Mammary epithelial cell (primary cell): ENCODE measurements at regions of chr10 and their contacts with region 1.

Region 1: GRCh38 chr10:43026011-43026973 is 50.6 kb upstream of the RET start:
- DNase-seq: peak; percentile 98
- H3K4me3 ChIP-seq: peak overlapping the region in 1 of 3 experiments; percentile 26
- H3K27ac ChIP-seq: peak overlapping the region; percentile 40
- H3K4me1 ChIP-seq: peaks cover 19% of the 10 kb centered on the region
- H3K27me3 ChIP-seq: no peaks in the 10 kb centered on the region
- CTCF ChIP-seq: no peak

Region 2: DNA sequence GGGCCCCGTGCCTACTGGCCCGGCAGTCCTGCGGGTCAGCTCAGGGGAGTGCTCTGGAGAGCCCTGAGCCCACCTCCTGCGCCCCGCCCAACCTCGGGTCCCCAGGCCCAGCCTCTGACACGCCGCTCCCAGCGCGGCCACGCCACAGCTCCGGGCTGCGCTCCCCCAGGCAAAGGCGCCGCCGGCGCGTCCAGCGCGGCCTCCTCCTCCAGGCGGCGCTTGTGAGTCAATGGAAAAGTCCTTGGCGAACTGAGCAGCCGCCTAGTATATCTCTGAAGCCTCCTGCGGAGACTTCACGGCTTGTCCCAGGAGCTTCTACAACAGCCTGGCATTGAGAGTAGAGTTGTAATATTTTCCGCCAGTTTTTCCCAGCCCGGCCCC is 273.2 kb before region 1 on chr10:
- CTCF ChIA-PET with region 1: no interaction called
- dilution Hi-C with region 1: no loop called
- in situ Hi-C with region 1: no loop called
- intact Hi-C with region 1: loop called (anchors 5 kb)
- DNase-seq: peak; percentile 64
- H3K4me3 ChIP-seq: peak overlapping the region; percentile 44 to 56 (median 55)
- H3K27ac ChIP-seq: no peak overlapping the region
- H3K4me1 ChIP-seq: peaks cover 18% of the 10 kb centered on the region
- H3K27me3 ChIP-seq: peaks cover 18% of the 10 kb centered on the region
- CTCF ChIP-seq: peak; percentile 65 to 94

Region 3: GRCh38 chr10:42866115-42866995 is 159.9 kb before region 1 on chr10:
- CTCF ChIA-PET with region 1: no interaction called
- dilution Hi-C with region 1: no loop called
- in situ Hi-C with region 1: no loop called
- intact Hi-C with region 1: loop called (anchors 1 kb)
- DNase-seq: peak; percentile 57
- H3K4me3 ChIP-seq: peak overlapping the region in 2 of 3 experiments; percentile 32 to 34
- H3K27ac ChIP-seq: no peak overlapping the region
- H3K4me1 ChIP-seq: peaks cover 10% of the 10 kb centered on the region
- H3K27me3 ChIP-seq: no peaks in the 10 kb centered on the region
- CTCF ChIP-seq: peak; percentile 43 to 78

Region 4: DNA sequence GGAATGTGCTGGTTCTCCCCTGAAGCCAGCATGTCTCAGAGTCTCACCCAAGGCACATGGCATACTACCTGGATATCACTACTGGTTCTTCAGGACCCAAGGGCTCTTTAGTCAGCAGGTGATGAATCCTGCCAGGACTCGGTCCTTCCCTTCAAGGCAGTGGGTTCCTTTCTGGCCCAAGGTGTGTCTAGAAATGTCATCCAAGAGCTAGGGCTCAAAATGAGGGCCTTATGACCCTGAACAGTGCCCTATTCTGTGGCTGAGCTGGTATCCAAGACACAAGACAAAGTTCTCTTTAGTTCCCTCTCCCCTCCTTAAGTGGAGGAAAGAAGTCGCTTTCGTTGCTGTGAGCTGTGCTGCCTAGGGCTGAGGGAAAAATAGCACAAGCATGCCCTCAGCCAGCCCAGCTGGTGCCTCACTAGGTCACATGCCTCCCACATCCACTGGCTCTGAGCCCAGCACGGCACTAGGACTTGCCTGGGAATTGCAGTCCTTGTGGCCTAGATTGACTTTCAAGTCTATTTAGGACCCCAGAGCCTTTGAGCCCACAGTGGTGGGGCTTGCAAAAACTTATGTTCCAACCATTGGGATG is 137.7 kb before region 1 on chr10:
- CTCF ChIA-PET with region 1: no interaction called
- dilution Hi-C with region 1: no loop called
- in situ Hi-C with region 1: no loop called
- intact Hi-C with region 1: no loop called
- DNase-seq: no peak
- H3K4me3 ChIP-seq: no peak overlapping the region
- H3K27ac ChIP-seq: no peak overlapping the region
- H3K4me1 ChIP-seq: no peaks in the 10 kb centered on the region
- H3K27me3 ChIP-seq: no peaks in the 10 kb centered on the region
- CTCF ChIP-seq: no peak

Region 5: GRCh38 chr10:43069579-43069978 is 43.3 kb after region 1 on chr10:
- CTCF ChIA-PET with region 1: no interaction called
- dilution Hi-C with region 1: loop called (anchors 5 kb)
- in situ Hi-C with region 1: no loop called
- intact Hi-C with region 1: no loop called
- DNase-seq: no peak
- H3K4me3 ChIP-seq: no peak overlapping the region
- H3K27ac ChIP-seq: no peak overlapping the region
- H3K4me1 ChIP-seq: no peaks in the 10 kb centered on the region
- H3K27me3 ChIP-seq: no peaks in the 10 kb centered on the region
- CTCF ChIP-seq: no peak

Region 6: DNA sequence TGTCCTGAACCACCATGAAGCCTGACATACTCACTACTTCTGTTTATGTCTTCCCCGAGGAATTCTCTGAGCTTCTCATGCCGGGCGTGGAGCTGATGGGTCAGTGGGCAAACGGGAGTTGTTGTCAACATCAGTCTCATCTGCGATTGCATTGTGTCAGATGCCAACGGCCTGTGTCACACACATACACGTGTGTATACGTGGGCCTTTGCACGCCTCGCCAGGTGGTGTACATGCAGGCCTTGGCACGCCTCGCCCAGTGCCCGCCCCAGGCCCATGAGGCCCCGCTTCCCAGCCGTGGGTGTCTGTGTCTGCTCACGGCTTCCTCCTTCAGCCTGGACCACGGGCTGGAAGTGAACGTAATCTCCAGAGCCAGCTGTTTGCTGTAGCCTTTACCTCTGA is 104.5 kb after region 1 on chr10:
- CTCF ChIA-PET with region 1: no interaction called
- dilution Hi-C with region 1: loop called (anchors 5 kb)
- in situ Hi-C with region 1: no loop called
- intact Hi-C with region 1: no loop called
- DNase-seq: no peak
- H3K4me3 ChIP-seq: no peak overlapping the region
- H3K27ac ChIP-seq: no peak overlapping the region
- H3K4me1 ChIP-seq: peaks cover 13% of the 10 kb centered on the region
- H3K27me3 ChIP-seq: no peaks in the 10 kb centered on the region
- CTCF ChIP-seq: no peak

Region 7: DNA sequence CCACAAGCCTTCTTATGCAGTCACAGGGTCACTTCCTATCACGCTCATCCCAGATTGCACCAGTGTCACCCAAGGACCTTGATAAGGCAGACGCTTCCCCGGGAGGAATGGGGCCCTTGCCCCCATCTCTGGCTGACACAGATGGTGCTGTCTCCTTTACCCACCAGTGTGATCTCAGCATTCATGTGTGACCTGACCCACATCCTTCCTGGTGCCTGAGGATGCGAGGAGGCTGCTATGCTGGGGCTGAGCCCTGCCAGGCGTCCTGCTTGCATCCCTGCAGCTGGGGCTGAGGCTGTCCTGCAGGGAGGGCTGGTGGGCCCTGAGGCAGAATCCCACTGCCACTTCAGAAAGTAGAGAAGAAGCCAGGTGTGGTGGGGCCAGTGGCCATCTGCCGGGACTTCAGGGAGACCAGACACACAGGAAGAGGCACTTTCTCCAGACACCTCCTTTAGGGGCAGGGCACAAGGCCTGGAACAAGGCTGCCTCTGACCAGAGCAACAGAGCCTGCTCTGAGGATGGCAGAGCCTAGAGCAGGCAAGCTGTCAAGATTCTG is 205.3 kb after region 1 on chr10:
- CTCF ChIA-PET with region 1: no interaction called
- dilution Hi-C with region 1: no loop called
- in situ Hi-C with region 1: no loop called
- intact Hi-C with region 1: no loop called
- DNase-seq: no peak
- H3K4me3 ChIP-seq: no peak overlapping the region
- H3K27ac ChIP-seq: no peak overlapping the region
- H3K4me1 ChIP-seq: peaks cover 4% of the 10 kb centered on the region
- H3K27me3 ChIP-seq: peaks cover 12% of the 10 kb centered on the region
- CTCF ChIP-seq: no peak

Region 8: GRCh38 chr10:43304687-43305340 is 278.5 kb after region 1 on chr10:
- CTCF ChIA-PET with region 1: no interaction called
- dilution Hi-C with region 1: no loop called
- in situ Hi-C with region 1: no loop called
- intact Hi-C with region 1: no loop called
- DNase-seq: peak; percentile 11
- H3K4me3 ChIP-seq: peak overlapping the region; percentile 32 to 36 (median 33)
- H3K27ac ChIP-seq: no peak overlapping the region
- H3K4me1 ChIP-seq: peaks cover 5% of the 10 kb centered on the region
- H3K27me3 ChIP-seq: no peaks in the 10 kb centered on the region
- CTCF ChIP-seq: no peak